ENCODE measurements at regions of chr15 and their contacts with region 1.

Region 1: DNA sequence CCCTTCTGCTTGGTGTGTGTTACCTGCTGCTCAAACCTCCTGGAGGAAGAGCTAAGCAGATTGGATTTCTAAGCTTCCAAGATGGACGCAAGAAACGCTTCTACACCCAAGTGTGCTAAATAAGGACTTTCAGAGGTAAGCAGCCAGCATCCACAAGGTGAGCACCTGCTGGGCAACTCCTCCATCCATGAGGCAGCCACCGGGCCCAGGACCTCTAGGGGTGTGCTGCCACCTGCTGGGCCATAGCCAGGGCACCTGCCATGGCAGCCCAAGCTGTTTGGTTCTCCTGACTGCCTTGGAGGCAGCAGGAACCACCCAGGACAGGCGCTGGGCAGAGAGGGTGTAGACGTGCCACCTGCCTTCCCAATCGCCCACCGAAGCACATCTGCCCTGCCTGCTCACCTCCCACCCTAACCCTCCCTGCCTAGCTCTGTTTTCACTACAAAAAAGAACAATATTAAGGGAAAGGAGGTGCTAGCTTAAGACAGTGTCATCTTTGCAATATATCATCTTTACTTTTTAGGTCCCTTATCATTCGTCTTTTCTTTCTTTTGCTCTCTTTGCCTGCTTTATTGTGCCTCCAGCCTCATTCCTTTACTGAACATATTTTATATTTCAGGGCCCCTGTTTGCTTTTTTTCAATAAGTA is 12.9 kb downstream of the C15orf62 start:
- DNase-seq: peak; percentile 68
- ATAC-seq: peak; percentile 79
- H3K4me3 ChIP-seq: no peak overlapping the region
- H3K27ac ChIP-seq: no peak overlapping the region
- H3K4me1 ChIP-seq: peaks cover 31 to 46% of the 10 kb centered on the region in 2 experiments
- H3K27me3 ChIP-seq: no peaks in the 10 kb centered on the region
- CTCF ChIP-seq: peak; percentile 88 to 95 (median 92)
- POLR2A ChIP-seq: no peak
- RAD21 ChIP-seq: peak; percentile 95

Region 2: GRCh38 chr15:40513609-40514008 is 269.1 kb before region 1 on chr15:
- CTCF ChIA-PET with region 1: no interaction called
- POLR2A ChIA-PET with region 1: no interaction called
- RAD21 ChIA-PET with region 1: no interaction called
- intact Hi-C with region 1: loop called (anchors 2 kb)
- DNase-seq: no peak
- ATAC-seq: no peak
- H3K4me3 ChIP-seq: no peak overlapping the region
- H3K27ac ChIP-seq: no peak overlapping the region
- H3K4me1 ChIP-seq: peaks cover 12 to 17% of the 10 kb centered on the region in 2 experiments
- H3K27me3 ChIP-seq: no peaks in the 10 kb centered on the region
- CTCF ChIP-seq: no peak
- POLR2A ChIP-seq: no peak
- RAD21 ChIP-seq: no peak

Region 3: DNA sequence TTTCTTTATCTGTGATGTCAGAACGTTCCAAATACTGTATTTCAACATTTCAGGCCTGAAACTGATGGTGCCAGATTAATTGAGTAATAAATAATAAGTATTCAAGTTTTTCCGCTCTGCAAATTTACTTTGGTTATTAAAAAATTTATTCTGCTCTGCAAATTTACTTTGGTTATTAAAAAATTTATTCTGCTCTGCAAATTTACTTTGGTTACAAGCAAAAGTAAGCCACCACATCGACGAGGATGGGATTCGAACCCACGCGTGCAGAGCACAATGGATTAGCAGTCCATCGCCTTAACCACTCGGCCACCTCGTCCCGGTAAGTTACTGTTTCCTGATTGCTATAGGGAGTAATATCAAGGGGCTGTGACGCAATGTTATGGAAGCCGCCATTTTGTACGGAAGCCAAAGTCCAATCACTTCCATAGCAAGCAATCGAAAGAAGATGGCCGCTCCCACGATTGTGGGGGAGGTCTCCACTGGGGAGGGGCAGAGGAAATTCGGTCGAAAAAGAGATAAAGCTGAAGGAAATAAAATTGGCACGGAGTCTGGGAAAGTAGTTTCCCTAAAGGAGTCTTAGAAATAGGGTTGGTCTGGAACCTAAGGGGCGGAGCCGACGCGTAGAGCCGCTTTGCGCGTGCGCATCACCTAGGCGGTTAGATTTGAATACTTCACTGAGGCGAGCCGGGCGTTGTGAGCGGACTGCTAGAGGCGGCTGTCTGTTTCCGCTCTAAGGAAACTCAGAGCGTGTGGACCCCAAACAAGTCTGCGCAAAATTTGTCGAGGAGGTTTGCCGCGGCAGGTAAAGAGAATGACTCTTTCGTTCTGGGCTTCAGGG is 188.9 kb before region 1 on chr15 and contains the start of gene KNL1:
- CTCF ChIA-PET with region 1: interaction called, 4 read pairs
- POLR2A ChIA-PET with region 1: interaction called, 3 read pairs
- RAD21 ChIA-PET with region 1: no interaction called
- intact Hi-C with region 1: loop called (anchors 10 kb)
- DNase-seq: peak; percentile 93
- ATAC-seq: peak; percentile 81
- H3K4me3 ChIP-seq: peak within 1 kb of the TSS; percentile 80 to 89
- H3K27ac ChIP-seq: peak within 1 kb of the TSS; percentile 89
- H3K4me1 ChIP-seq: peaks cover 0 to 24% of the 10 kb centered on the region in 2 experiments; a peak in 2 of 4 replicates
- H3K27me3 ChIP-seq: no peaks in the 10 kb centered on the region
- CTCF ChIP-seq: no peak
- POLR2A ChIP-seq: peak; percentile 62
- RAD21 ChIP-seq: no peak
- total RNA-seq, gene KNL1: 30.6 TPM

Region 4: DNA sequence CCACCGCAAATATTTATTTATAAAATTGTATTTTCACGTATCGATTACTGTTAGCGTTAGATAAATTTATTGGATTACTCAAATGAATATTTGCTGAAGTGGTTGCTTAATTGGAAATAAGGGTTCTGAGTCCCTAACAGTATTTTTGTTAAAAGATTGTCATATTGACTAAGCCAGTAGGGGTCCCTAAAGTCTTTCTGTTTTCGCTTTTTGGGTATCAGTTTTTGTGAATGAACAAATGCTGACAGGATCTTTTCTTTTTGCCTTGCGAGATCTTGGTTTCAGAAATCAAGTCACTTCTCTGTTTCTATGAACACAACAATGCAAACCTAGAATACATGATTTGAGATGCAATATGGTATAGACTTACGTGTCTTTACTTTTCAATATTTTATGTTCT is 80.6 kb before region 1 on chr15:
- CTCF ChIA-PET with region 1: no interaction called
- POLR2A ChIA-PET with region 1: no interaction called
- RAD21 ChIA-PET with region 1: interaction called in 1 of 2 experiments, 3 read pairs
- intact Hi-C with region 1: loop called (anchors 2 kb)
- DNase-seq: no peak
- ATAC-seq: no peak
- H3K4me3 ChIP-seq: no peak overlapping the region
- H3K27ac ChIP-seq: no peak overlapping the region
- H3K4me1 ChIP-seq: no peaks in the 10 kb centered on the region; a peak in 1 of 4 replicates
- H3K27me3 ChIP-seq: no peaks in the 10 kb centered on the region
- CTCF ChIP-seq: peak in 2 of 3 experiments; percentile 8 to 44; a peak in 2 of 6 replicates
- POLR2A ChIP-seq: no peak
- RAD21 ChIP-seq: peak; percentile 43

Region 5: DNA sequence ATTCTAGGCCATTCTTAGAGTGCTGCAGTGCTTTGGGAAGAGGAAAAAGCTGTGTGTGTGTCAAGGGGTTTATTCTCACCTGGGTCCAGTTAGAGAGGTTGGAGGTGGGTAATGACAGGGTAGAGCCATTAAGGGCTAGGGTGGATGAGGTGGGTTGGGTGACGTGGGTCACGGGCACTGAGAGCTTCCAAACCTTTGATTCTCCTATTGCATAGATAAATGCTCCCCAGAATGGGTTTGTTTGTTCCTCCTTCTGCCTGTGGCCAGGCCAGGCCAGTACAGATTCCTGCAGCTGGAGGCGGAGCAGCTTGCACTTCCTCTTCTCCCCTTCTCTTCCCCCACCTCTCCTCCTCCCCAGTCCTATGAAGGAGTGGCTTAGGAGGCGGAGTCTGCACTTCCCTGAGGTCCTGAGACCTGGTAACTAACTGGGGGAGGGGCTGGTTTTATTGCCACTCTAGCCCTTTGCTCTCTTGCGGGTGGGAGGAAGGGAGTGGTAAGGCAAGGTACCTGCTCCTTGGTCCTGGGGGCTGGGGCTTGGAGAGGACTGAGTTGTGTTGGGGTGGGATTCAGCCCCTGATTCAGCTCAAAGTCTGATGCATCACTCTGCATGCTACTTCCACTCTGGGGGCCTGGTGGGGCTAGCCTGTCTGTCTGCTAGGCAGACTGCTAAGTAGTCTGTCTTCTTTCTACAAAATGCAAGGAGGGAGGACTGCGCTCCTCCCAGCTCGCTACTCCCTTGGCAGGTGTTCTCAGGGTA is 64.7 kb after region 1 on chr15:
- CTCF ChIA-PET with region 1: interaction called, 5 read pairs
- POLR2A ChIA-PET with region 1: interaction called, 4 read pairs
- RAD21 ChIA-PET with region 1: interaction called in 1 of 2 experiments, 3 read pairs
- intact Hi-C with region 1: loop called (anchors 2 kb)
- DNase-seq: no peak
- ATAC-seq: peak; percentile 46
- H3K4me3 ChIP-seq: peak overlapping the region; percentile 6 to 95; a peak in 3 of 4 replicates
- H3K27ac ChIP-seq: peak overlapping the region; percentile 93
- H3K4me1 ChIP-seq: peaks cover 34 to 45% of the 10 kb centered on the region in 2 experiments
- H3K27me3 ChIP-seq: no peaks in the 10 kb centered on the region
- CTCF ChIP-seq: no peak
- POLR2A ChIP-seq: no peak
- RAD21 ChIP-seq: no peak

Region 6: GRCh38 chr15:40893733-40894688 is 111.3 kb after region 1 on chr15 and contains the start of gene VPS18:
- CTCF ChIA-PET with region 1: interaction called, 30 read pairs
- POLR2A ChIA-PET with region 1: interaction called, 3 read pairs
- RAD21 ChIA-PET with region 1: interaction called, 4 to 8 read pairs
- intact Hi-C with region 1: loop called (anchors 1 kb)
- DNase-seq: peak; percentile 94
- ATAC-seq: peak; percentile 93
- H3K4me3 ChIP-seq: peak within 1 kb of the TSS; percentile 94
- H3K27ac ChIP-seq: peak within 1 kb of the TSS; percentile 73
- H3K4me1 ChIP-seq: peaks cover 7 to 26% of the 10 kb centered on the region in 2 experiments; a peak in 3 of 4 replicates
- H3K27me3 ChIP-seq: no peaks in the 10 kb centered on the region
- CTCF ChIP-seq: peak; percentile 70 to 89 (median 81)
- POLR2A ChIP-seq: peak; percentile 67
- RAD21 ChIP-seq: peak; percentile 97
- total RNA-seq, gene VPS18: 16.9 TPM

Region 7: GRCh38 chr15:41043276-41043951 is 260.7 kb after region 1 on chr15:
- CTCF ChIA-PET with region 1: no interaction called
- POLR2A ChIA-PET with region 1: no interaction called
- RAD21 ChIA-PET with region 1: no interaction called
- intact Hi-C with region 1: no loop called
- DNase-seq: no peak
- ATAC-seq: no peak
- H3K4me3 ChIP-seq: no peak overlapping the region
- H3K27ac ChIP-seq: no peak overlapping the region
- H3K4me1 ChIP-seq: no peaks in the 10 kb centered on the region
- H3K27me3 ChIP-seq: no peaks in the 10 kb centered on the region
- CTCF ChIP-seq: no peak
- POLR2A ChIP-seq: no peak
- RAD21 ChIP-seq: no peak

Measured in HCT116 (cell line).